MCF 10A (cell line): ENCODE measurements at regions of chr2 and their contacts with region 1.

Region 1: GRCh38 chr2:47767880-47768609 is 14.9 kb upstream of the MSH6 start:
- DNase-seq: peak; percentile 50
- H3K4me3 Mint-ChIP-seq: no peak overlapping the region
- H3K27ac Mint-ChIP-seq: no peak overlapping the region
- H3K4me1 Mint-ChIP-seq: peaks cover 7% of the 10 kb centered on the region
- H3K27me3 Mint-ChIP-seq: no peaks in the 10 kb centered on the region
- CTCF ChIP-seq: peak; percentile 98

Region 2: DNA sequence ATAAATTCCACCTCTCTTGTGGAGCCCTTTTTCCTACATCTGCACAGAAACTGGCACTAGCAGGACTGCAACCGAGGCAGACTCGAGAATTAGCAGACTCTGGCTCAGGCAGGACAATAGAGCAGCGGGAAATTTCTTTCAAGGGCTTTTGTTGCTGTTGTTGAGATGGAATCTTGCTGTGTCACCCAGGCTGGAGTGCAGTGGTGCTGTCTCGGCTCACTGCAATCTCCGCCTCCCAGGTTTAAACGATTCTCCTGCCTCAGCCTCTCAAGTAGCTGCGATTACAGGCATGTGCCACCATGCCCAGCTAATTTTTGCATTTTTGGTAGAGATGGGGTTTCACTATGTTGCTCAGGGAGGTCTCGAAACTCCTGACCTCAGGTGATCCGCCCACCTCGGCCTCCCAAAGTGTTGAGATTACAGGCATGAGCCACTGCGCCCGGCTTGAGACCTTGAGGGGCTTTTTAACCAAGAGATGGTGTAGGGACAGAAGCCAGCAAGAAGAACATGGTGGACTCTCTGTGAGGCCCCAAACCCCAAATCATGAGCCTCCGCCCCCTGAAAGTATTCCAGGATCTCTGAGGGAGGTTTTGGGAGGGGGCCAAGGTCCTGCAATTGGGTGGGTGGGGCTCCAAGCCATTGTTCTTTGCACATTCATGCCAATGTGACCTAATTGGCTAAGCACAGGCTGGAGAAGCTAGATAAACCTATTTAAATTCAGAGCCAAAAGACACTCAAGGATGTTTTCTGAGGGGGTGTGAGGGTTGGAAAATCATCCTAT is 433.5 kb before region 1 on chr2:
- CTCF ChIA-PET with region 1: interaction called, 66 read pairs
- POLR2A ChIA-PET with region 1: no interaction called
- intact Hi-C with region 1: loop called (anchors 1 kb)
- DNase-seq: no peak
- H3K4me3 Mint-ChIP-seq: no peak overlapping the region
- H3K27ac Mint-ChIP-seq: no peak overlapping the region
- H3K4me1 Mint-ChIP-seq: no peaks in the 10 kb centered on the region
- H3K27me3 Mint-ChIP-seq: no peaks in the 10 kb centered on the region
- CTCF ChIP-seq: no peak

Region 3: GRCh38 chr2:47339745-47340541 is 428.1 kb before region 1 on chr2:
- CTCF ChIA-PET with region 1: interaction called, 66 read pairs
- POLR2A ChIA-PET with region 1: no interaction called
- intact Hi-C with region 1: loop called (anchors 1 kb)
- DNase-seq: peak; percentile 93
- H3K4me3 Mint-ChIP-seq: no peak overlapping the region
- H3K27ac Mint-ChIP-seq: no peak overlapping the region
- H3K4me1 Mint-ChIP-seq: peaks cover 12% of the 10 kb centered on the region
- H3K27me3 Mint-ChIP-seq: no peaks in the 10 kb centered on the region
- CTCF ChIP-seq: no peak

Region 4: GRCh38 chr2:47402805-47403608 is 365.0 kb before region 1 on chr2 and contains the start of gene MSH2:
- CTCF ChIA-PET with region 1: interaction called, 10 read pairs
- POLR2A ChIA-PET with region 1: interaction called, 5 read pairs
- intact Hi-C with region 1: no loop called
- DNase-seq: peak; percentile 88
- H3K4me3 Mint-ChIP-seq: peak within 1 kb of the TSS; percentile 99
- H3K27ac Mint-ChIP-seq: peak within 1 kb of the TSS; percentile 80
- H3K4me1 Mint-ChIP-seq: peaks cover 13% of the 10 kb centered on the region
- H3K27me3 Mint-ChIP-seq: no peaks in the 10 kb centered on the region
- CTCF ChIP-seq: no peak
- total RNA-seq, gene MSH2: 7.6 and 8.7 TPM in 2 replicates

Region 5: DNA sequence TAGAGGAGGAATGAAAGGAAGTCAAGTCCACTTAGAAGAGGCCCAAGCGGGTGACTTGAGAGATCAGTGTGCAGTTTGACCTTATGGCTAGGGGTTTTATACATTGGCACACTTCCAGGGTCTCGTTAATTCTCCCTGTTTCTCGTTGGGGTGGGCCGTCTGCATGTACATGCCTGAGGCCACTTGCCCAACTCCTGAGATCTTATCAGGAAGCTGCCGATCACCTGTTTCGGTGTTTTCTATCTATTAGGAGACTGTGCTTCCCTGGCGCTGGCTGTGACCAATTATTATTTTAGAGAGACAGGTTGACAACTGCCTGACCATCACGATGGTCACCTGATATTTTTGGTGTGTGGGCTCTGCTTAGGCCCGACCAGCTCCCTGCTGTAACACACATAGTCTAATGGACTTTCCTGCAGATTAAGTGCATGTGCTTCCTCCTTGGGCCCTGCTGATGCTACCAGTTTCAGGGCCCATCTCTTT is 16.1 kb before region 1 on chr2:
- CTCF ChIA-PET with region 1: interaction called, 16 read pairs
- POLR2A ChIA-PET with region 1: no interaction called
- intact Hi-C with region 1: no loop called
- DNase-seq: no peak
- H3K4me3 Mint-ChIP-seq: no peak overlapping the region
- H3K27ac Mint-ChIP-seq: peak overlapping the region; percentile 83
- H3K4me1 Mint-ChIP-seq: peaks cover 11% of the 10 kb centered on the region
- H3K27me3 Mint-ChIP-seq: no peaks in the 10 kb centered on the region
- CTCF ChIP-seq: no peak

Region 6: DNA sequence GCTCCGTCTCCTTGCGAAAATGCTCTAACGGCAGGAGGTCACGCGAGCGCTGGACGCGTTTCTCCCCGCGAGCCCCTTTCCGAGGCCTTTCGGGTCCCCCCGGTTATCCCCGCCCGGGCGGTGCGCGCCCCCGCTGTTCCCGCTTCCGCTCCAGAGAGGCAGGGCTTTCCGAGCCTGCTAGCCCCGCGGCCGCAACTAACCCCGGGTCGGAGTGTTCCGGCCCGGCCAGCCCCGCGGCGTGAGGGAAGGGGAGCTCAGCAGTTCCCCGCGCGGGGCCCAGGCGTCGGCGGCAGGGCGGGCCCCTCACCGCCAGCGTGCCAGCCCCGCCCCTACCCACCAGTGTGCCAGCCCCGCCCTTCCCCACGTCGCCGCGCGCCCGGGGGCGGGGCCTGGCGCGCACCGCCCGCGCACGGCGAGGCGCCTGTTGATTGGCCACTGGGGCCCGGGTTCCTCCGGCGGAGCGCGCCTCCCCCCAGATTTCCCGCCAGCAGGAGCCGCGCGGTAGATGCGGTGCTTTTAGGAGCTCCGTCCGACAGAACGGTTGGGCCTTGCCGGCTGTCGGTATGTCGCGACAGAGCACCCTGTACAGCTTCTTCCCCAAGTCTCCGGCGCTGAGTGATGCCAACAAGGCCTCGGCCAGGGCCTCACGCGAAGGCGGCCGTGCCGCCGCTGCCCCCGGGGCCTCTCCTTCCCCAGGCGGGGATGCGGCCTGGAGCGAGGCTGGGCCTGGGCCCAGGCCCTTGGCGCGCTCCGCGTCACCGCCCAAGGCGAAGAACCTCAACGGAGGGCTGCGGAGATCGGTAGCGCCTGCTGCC is 14.8 kb after region 1 on chr2 and contains the start of gene MSH6:
- CTCF ChIA-PET with region 1: interaction called, 23 read pairs
- POLR2A ChIA-PET with region 1: interaction called, 13 read pairs
- intact Hi-C with region 1: no loop called
- DNase-seq: peak; percentile 86
- H3K4me3 Mint-ChIP-seq: peak within 1 kb of the TSS; percentile 92
- H3K27ac Mint-ChIP-seq: peak within 1 kb of the TSS; percentile 75
- H3K4me1 Mint-ChIP-seq: peaks cover 14% of the 10 kb centered on the region
- H3K27me3 Mint-ChIP-seq: no peaks in the 10 kb centered on the region
- CTCF ChIP-seq: no peak
- total RNA-seq, gene MSH6: 40.3 and 45.3 TPM in 2 replicates